CD4-positive, alpha-beta memory T cell (primary cell): ENCODE measurements at regions of chr11 and their contacts with region 1.

Region 1: DNA sequence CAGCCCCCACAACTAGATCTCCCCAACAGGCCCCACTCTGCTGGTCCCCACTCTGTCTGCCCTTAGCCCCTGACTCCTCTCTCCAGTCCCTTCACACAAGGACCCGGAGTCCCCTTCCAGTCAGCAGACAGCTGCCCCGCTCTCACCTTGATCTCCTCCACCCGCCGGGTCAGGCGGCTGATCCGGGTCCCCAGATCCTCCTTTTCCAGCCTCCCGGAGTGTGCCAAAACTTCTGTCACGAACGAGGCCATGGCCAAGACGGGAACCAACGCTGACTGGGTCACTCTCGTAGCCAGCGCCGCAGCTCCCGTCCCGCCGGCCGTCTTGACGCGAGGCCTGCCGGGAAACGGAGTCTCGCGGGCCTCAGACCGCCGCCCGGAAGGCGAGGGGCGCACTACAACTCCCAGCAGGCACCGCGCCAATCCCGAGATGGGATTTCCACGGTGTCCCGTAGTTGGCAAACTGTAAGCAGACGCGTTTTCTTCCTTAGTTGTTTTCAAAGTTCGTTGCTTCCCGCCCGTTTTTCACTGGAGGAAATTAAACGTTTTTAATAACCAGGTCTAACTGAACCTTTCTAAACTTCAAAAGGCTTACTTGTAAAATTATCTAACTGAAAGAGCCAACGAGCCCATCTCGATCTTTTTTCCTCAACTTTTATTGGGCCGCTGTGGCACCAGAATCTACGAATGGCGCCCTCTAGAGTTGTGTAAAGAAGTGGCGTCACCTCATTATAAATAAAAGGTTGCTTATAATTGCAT is at the start of gene ZW10:
- DNase-seq: peak; percentile 90 to 92 (median 92)
- H3K4me3 ChIP-seq: peak within 1 kb of the TSS; percentile 64 to 91
- H3K4me3 Mint-ChIP-seq: peak within 1 kb of the TSS; percentile 89 to 99 (median 98)
- H3K27ac ChIP-seq: peak within 1 kb of the TSS; percentile 62
- H3K27ac Mint-ChIP-seq: peak within 1 kb of the TSS; percentile 88 to 98 (median 96)
- H3K4me1 ChIP-seq: peaks cover 19% of the 10 kb centered on the region
- H3K4me1 Mint-ChIP-seq: peaks cover 12 to 31% (median 22%) of the 10 kb centered on the region in 4 donors
- H3K27me3 ChIP-seq: no peaks in the 10 kb centered on the region
- H3K27me3 Mint-ChIP-seq: peaks cover 0 to 3% of the 10 kb centered on the region in 2 donors
- total RNA-seq, gene ZW10: 8.7 to 9.7 TPM

Region 2: DNA sequence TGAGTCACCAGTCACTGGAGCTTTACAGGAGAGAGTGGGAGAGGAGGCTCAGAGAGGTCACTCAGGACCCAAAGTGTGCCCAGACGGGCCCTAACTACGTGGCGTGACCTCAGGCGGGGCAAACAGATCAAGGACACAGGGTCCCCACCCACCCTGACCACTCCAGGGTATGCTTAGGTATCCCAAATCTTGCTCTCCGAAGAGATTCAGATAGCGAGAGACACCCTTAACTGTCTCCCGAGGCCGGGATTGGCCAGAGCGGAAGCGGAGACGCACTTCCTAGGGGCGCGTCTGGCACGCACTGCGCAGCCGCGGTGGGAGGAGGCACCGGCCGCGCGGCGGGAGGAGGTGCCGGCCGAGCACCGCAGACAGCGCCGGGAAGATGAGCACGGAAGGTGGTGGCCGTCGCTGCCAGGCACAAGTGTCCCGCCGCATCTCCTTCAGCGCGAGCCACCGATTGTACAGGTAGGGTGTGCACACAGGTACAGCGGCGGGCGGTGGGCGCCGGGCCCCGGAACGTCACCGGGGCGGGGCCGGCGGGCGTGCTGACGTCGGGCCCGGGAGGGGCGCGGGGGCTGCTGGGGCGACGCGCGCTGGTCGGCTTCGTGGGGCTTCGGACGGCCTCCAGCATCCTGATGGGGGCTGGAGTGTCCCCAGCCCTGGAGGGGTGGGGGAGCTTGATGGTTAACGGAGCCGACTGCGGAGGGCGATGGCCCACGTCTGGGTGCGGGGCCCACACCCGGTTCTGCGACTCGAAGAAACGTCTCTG is 1547.3 kb before region 1 on chr11 and contains the start of gene PTS:
- CTCF ChIA-PET with region 1: no interaction called
- POLR2A ChIA-PET with region 1: no interaction called
- intact Hi-C with region 1: loop called (anchors 2 kb)
- DNase-seq: peak; percentile 81 to 91 (median 88)
- H3K4me3 ChIP-seq: peak within 1 kb of the TSS; percentile 98 to 100
- H3K4me3 Mint-ChIP-seq: peak within 1 kb of the TSS; percentile 92 to 96 (median 94)
- H3K27ac ChIP-seq: peak within 1 kb of the TSS; percentile 98
- H3K27ac Mint-ChIP-seq: peak within 1 kb of the TSS; percentile 96 to 99 (median 99)
- H3K4me1 ChIP-seq: peaks cover 15% of the 10 kb centered on the region
- H3K4me1 Mint-ChIP-seq: peaks cover 19 to 32% (median 22%) of the 10 kb centered on the region in 4 donors
- H3K27me3 ChIP-seq: no peaks in the 10 kb centered on the region
- H3K27me3 Mint-ChIP-seq: no peaks in the 10 kb centered on the region
- total RNA-seq, gene PTS: 23.6 to 26.9 TPM

Region 3: DNA sequence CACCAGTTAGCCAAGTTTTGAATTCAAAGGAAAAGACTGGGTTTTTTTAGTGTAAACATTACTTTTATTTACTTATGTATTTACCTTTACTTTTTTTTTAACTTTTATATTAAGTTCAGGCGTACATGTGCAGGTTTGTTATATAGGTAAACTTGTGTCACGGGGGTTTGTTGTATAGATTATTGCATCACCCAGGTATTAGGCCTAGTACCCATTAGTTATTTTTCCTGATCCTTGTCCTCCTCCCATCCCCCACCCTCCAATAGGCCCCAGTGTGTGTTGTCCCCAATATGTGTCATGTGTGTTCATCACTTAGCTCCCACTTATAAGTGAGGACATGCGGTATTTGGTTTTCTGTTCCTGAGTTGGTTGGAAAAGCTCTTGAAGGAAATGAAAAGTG is 20.7 kb before region 1 on chr11:
- CTCF ChIA-PET with region 1: no interaction called
- POLR2A ChIA-PET with region 1: no interaction called
- intact Hi-C with region 1: no loop called
- DNase-seq: no peak
- H3K4me3 ChIP-seq: no peak overlapping the region
- H3K4me3 Mint-ChIP-seq: no peak overlapping the region
- H3K27ac ChIP-seq: no peak overlapping the region
- H3K27ac Mint-ChIP-seq: no peak overlapping the region
- H3K4me1 ChIP-seq: no peaks in the 10 kb centered on the region
- H3K4me1 Mint-ChIP-seq: no peaks in the 10 kb centered on the region
- H3K27me3 ChIP-seq: no peaks in the 10 kb centered on the region
- H3K27me3 Mint-ChIP-seq: no peaks in the 10 kb centered on the region

Region 4: GRCh38 chr11:113875234-113876073 is 101.9 kb after region 1 on chr11 and contains the start of gene USP28:
- CTCF ChIA-PET with region 1: no interaction called
- POLR2A ChIA-PET with region 1: no interaction called
- intact Hi-C with region 1: loop called (anchors 5 kb)
- DNase-seq: peak; percentile 71 to 84 (median 76)
- H3K4me3 ChIP-seq: peak within 1 kb of the TSS; percentile 48 to 78
- H3K4me3 Mint-ChIP-seq: peak within 1 kb of the TSS; percentile 98 to 100 (median 99)
- H3K27ac ChIP-seq: peak within 1 kb of the TSS; percentile 68
- H3K27ac Mint-ChIP-seq: peak within 1 kb of the TSS; percentile 91 to 99 (median 98)
- H3K4me1 ChIP-seq: peaks cover 24% of the 10 kb centered on the region
- H3K4me1 Mint-ChIP-seq: peaks cover 23 to 55% (median 40%) of the 10 kb centered on the region in 4 donors
- H3K27me3 ChIP-seq: no peaks in the 10 kb centered on the region
- H3K27me3 Mint-ChIP-seq: no peaks in the 10 kb centered on the region
- total RNA-seq, gene USP28: 17.2 to 17.3 TPM